HEK293 (cell line): ENCODE measurements at regions of chr20 and their contacts with region 1.

Region 1: DNA sequence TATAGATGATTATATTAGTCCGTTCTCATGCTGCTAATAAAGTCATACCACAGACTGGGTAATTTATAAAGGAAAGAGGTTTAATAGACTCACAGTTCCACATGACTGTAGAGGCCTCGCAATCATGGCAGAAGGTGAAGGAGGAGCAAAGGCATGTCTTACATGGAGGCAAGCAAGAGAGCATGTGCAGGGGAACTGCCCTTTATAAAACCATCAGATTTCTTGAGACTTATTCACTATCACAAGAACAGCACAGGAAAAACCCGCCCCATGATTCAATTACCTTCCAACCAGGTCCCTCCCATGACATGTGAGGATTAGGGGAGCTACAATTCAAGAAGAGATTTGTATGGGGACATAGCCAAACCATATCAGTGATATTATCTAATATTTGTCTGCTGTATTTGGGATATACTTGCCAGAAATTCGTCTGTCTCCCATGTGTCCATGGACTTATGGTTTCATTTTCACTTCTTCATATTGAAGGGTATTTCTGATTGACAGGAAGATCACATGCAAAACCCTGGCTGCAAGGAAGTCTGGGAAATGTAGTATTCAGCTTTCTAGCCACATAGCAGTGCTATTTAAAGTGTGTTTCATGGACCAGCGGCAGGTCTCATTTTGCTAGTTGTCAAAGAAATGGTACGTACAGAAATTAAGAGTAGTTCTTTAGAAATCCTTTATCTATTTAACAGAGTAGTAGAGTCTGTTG is 50.5 kb upstream of the PAK5 start:
- H3K4me3 ChIP-seq: no peak overlapping the region
- H3K27ac ChIP-seq: no peak overlapping the region
- H3K4me1 ChIP-seq: no peaks in the 10 kb centered on the region
- CTCF ChIP-seq: no peak

Region 2: DNA sequence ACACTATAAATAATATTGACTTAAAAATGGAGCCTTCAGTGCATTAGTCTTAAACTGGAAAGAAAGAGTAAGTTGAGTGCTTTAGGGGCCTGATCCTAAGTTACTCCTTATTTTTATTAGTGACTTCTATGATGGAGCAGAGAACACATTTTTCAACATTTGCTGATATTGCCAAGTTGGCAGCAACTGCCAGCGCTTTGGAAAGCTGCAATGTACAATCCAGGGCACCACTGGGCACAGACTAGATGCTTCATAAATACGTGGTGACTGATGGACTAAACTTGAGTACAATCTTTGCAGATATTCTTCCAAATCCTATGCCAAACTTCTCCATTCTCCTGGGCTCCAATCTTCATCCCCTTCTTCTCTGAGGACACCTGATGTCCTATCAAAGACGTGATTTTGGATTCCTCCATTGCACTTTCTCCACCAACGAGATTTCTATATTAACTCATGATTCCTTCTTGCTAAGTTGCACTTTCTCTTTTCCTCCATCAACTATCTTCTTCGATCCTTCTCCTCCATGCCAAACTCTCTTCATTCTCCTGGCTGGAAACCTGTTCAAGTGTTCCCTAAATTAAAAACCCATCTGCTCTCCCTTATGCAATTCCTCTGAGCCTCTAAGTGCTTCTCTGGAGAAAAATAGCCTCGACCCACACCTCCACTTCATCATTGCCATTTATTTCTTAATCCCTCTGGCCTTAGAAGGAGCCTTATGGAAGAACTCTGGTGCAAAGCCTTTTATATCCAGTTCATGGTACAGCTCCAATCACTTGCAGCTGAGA is 22.0 kb before region 1 on chr20:
- CTCF ChIA-PET with region 1: no interaction called
- POLR2A ChIA-PET with region 1: no interaction called
- H3K4me3 ChIP-seq: no peak overlapping the region
- H3K27ac ChIP-seq: no peak overlapping the region
- H3K4me1 ChIP-seq: no peaks in the 10 kb centered on the region
- CTCF ChIP-seq: no peak

Region 3: DNA sequence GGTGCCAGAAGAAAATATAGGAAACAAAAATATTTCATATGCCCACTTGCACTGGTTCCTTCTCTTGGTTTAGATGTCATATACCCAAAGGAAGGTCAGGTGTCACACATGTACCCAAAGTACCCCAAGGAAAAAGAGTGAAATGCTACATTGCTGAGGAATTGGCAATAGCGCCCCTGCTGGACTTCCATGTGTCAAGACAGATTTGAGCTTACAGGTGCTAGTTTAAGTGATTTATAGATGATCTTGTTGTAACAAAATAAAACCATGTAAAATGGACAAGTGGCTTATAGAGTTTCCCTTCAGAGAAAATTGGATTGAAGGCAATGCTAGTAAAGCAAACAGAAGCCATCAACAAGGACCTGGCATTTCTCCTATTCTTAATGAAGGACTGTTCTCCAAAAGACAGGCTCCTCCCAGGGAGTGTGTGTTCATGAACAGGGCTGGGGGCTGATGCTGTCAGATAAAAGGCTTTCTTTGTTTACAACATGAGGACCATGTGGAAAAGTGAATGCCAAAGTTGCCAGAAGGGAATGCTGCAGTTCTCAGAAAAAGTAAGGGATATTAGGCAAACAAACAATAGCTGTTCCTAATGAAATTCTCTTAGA is 13.7 kb after region 1 on chr20:
- CTCF ChIA-PET with region 1: interaction called, 24 read pairs
- POLR2A ChIA-PET with region 1: no interaction called
- H3K4me3 ChIP-seq: no peak overlapping the region
- H3K27ac ChIP-seq: no peak overlapping the region
- H3K4me1 ChIP-seq: no peaks in the 10 kb centered on the region
- CTCF ChIP-seq: no peak

Region 4: GRCh38 chr20:9912858-9913434 is 23.5 kb after region 1 on chr20:
- CTCF ChIA-PET with region 1: interaction called, 11 read pairs
- POLR2A ChIA-PET with region 1: no interaction called
- H3K4me3 ChIP-seq: no peak overlapping the region
- H3K27ac ChIP-seq: no peak overlapping the region
- H3K4me1 ChIP-seq: no peaks in the 10 kb centered on the region
- CTCF ChIP-seq: no peak